B cell (primary cell): ENCODE measurements at regions of chr7 and their contacts with region 1.

Region 1: DNA sequence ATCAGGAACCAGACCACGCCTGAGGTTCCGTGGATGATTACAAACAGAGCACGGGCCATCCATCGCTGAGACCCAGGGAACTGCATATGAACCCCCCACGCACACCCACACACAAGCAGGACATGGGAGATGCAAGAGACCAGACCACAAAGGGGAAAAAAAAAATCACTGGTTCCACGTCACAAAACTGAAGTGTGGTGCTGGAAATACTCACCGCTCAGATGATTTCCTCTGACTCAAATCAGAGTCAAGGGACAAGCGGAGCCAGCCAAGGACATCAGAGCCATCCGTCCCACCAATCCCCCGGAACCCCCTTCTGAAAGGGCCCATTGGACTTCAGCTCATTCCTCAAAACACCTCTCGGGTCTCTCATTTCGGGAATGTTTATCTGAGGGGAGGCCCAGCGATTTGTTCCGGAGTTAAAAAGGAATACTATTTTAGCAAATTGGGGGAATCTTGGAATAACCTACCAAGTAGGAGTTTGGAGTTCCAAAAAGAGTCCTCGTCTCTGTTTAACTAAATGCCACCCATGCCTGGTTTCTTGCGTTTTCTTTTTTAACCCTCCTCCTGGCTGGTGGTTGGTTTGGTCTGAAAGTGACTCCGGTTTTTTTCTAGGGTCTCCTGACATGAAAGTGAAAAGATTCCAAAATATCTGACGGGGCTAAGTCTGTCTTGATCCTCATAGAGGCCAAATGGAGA is 15.0 kb downstream of the SNX8 start:
- DNase-seq: peak; percentile 83
- ATAC-seq: peak; percentile 65
- H3K4me3 ChIP-seq: peak overlapping the region in 4 of 5 experiments; percentile 16 to 55 (median 35)
- H3K4me3 Mint-ChIP-seq: peak overlapping the region; percentile 89
- H3K27ac ChIP-seq: peak overlapping the region; percentile 84 to 86
- H3K27ac Mint-ChIP-seq: peak overlapping the region; percentile 97
- H3K4me1 ChIP-seq: peaks cover 58 to 69% of the 10 kb centered on the region in 2 donors
- H3K4me1 Mint-ChIP-seq: peaks cover 67% of the 10 kb centered on the region
- H3K27me3 ChIP-seq: no peaks in the 10 kb centered on the region
- H3K27me3 Mint-ChIP-seq: no peaks in the 10 kb centered on the region
- CTCF ChIP-seq: no peak

Region 2: DNA sequence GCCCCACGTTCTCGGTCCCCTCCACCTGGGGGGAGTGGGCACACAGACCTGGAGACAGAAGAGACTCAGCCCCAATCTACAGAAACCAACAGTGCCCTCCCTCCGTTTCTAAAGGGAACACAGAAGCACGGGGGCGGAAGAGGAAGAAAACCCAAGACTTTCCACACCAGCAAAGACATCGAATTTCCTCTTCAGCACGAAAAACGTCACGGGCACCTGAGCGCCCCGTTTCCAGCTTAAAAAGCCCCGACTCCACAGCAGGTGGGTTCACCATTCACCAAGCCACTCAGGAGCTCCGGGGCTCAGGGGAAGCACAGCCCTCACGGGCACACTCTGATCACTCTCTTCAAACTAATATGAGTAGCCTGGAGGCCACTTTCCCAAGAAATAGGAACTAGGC is 37.7 kb before region 1 on chr7:
- CTCF ChIA-PET with region 1: interaction called, 5 read pairs
- POLR2A ChIA-PET with region 1: interaction called, 3 read pairs
- intact Hi-C with region 1: loop called (anchors 5 kb)
- DNase-seq: peak; percentile 96
- ATAC-seq: peak; percentile 68
- H3K4me3 ChIP-seq: peak overlapping the region; percentile 18 to 44 (median 34)
- H3K4me3 Mint-ChIP-seq: peak overlapping the region; percentile 85
- H3K27ac ChIP-seq: peak overlapping the region; percentile 96 to 98
- H3K27ac Mint-ChIP-seq: peak overlapping the region; percentile 97
- H3K4me1 ChIP-seq: peaks cover 25 to 44% of the 10 kb centered on the region in 2 donors
- H3K4me1 Mint-ChIP-seq: peaks cover 40% of the 10 kb centered on the region
- H3K27me3 ChIP-seq: no peaks in the 10 kb centered on the region
- H3K27me3 Mint-ChIP-seq: no peaks in the 10 kb centered on the region
- CTCF ChIP-seq: no peak

Region 3: DNA sequence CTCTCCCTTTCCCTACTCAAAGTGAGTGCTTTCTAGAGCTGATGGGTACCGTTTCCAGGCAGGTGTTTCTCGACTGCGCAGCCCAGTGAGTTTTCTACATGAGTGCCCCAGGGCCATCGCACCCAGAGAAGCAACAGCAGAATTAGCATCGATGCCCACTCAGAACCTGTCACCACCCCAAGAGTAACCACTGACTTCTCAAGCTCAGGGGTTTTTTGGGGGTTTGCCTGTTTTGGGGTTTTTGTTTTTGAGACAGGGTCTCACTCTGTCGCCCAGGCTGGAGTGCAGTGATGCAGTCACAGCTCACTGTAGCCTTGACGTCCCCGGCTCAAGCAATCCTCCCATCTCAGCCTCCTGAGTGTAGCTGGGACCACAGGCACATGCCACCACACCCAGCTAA is 10.8 kb before region 1 on chr7:
- CTCF ChIA-PET with region 1: interaction called, 3 read pairs
- POLR2A ChIA-PET with region 1: interaction called, 7 read pairs
- intact Hi-C with region 1: loop called (anchors 2 kb)
- DNase-seq: peak; percentile 87
- ATAC-seq: peak; percentile 86
- H3K4me3 ChIP-seq: peak overlapping the region in 1 of 5 experiments; percentile 19
- H3K4me3 Mint-ChIP-seq: peak overlapping the region; percentile 82
- H3K27ac ChIP-seq: peak overlapping the region; percentile 75 to 76
- H3K27ac Mint-ChIP-seq: peak overlapping the region; percentile 94
- H3K4me1 ChIP-seq: peaks cover 20 to 25% of the 10 kb centered on the region in 2 donors
- H3K4me1 Mint-ChIP-seq: peaks cover 49% of the 10 kb centered on the region
- H3K27me3 ChIP-seq: no peaks in the 10 kb centered on the region
- H3K27me3 Mint-ChIP-seq: no peaks in the 10 kb centered on the region
- CTCF ChIP-seq: no peak

Region 4: GRCh38 chr7:2321020-2321419 is 21.7 kb after region 1 on chr7:
- CTCF ChIA-PET with region 1: no interaction called
- POLR2A ChIA-PET with region 1: no interaction called
- intact Hi-C with region 1: no loop called
- DNase-seq: no peak
- ATAC-seq: no peak
- H3K4me3 ChIP-seq: no peak overlapping the region
- H3K4me3 Mint-ChIP-seq: no peak overlapping the region
- H3K27ac ChIP-seq: no peak overlapping the region
- H3K27ac Mint-ChIP-seq: no peak overlapping the region
- H3K4me1 ChIP-seq: peaks cover 4 to 17% of the 10 kb centered on the region in 2 donors
- H3K4me1 Mint-ChIP-seq: peaks cover 11% of the 10 kb centered on the region
- H3K27me3 ChIP-seq: no peaks in the 10 kb centered on the region
- H3K27me3 Mint-ChIP-seq: no peaks in the 10 kb centered on the region
- CTCF ChIP-seq: no peak

Region 5: GRCh38 chr7:2709553-2710285 is 410.4 kb after region 1 on chr7:
- CTCF ChIA-PET with region 1: no interaction called
- POLR2A ChIA-PET with region 1: no interaction called
- intact Hi-C with region 1: no loop called
- DNase-seq: peak; percentile 91
- ATAC-seq: peak; percentile 74
- H3K4me3 ChIP-seq: peak overlapping the region in 4 of 5 experiments; percentile 44 to 77 (median 60)
- H3K4me3 Mint-ChIP-seq: peak overlapping the region; percentile 92
- H3K27ac ChIP-seq: peak overlapping the region; percentile 93 to 95
- H3K27ac Mint-ChIP-seq: peak overlapping the region; percentile 97
- H3K4me1 ChIP-seq: peaks cover 30 to 45% of the 10 kb centered on the region in 2 donors
- H3K4me1 Mint-ChIP-seq: peaks cover 47% of the 10 kb centered on the region
- H3K27me3 ChIP-seq: no peaks in the 10 kb centered on the region
- H3K27me3 Mint-ChIP-seq: no peaks in the 10 kb centered on the region
- CTCF ChIP-seq: peak; percentile 94